ENCODE measurements at regions of chr14 and their contacts with region 1.

Region 1: GRCh38 chr14:90301668-90302090 is 30.1 kb downstream of the NRDE2 start:
- DNase-seq: no peak
- ATAC-seq: peak; percentile 77 to 78
- H3K4me3 ChIP-seq: no peak overlapping the region
- H3K27ac ChIP-seq: peak overlapping the region; percentile 74 to 88 (median 82)
- H3K4me1 ChIP-seq: peaks cover 27 to 32% of the 10 kb centered on the region in 2 donors
- H3K27me3 ChIP-seq: no peaks in the 10 kb centered on the region
- CTCF ChIP-seq: peak in 4 of 5 experiments; percentile 36 to 66 (median 45)
- POLR2A ChIP-seq: no peak

Region 2: GRCh38 chr14:90556012-90556477 is 254.4 kb after region 1 on chr14:
- in situ Hi-C with region 1: no loop called
- intact Hi-C with region 1: no loop called
- DNase-seq: no peak
- ATAC-seq: no peak
- H3K4me3 ChIP-seq: no peak overlapping the region
- H3K27ac ChIP-seq: no peak overlapping the region
- H3K4me1 ChIP-seq: peaks cover 0 to 8% of the 10 kb centered on the region in 2 donors
- H3K27me3 ChIP-seq: no peaks in the 10 kb centered on the region
- CTCF ChIP-seq: no peak
- POLR2A ChIP-seq: no peak

Region 3: DNA sequence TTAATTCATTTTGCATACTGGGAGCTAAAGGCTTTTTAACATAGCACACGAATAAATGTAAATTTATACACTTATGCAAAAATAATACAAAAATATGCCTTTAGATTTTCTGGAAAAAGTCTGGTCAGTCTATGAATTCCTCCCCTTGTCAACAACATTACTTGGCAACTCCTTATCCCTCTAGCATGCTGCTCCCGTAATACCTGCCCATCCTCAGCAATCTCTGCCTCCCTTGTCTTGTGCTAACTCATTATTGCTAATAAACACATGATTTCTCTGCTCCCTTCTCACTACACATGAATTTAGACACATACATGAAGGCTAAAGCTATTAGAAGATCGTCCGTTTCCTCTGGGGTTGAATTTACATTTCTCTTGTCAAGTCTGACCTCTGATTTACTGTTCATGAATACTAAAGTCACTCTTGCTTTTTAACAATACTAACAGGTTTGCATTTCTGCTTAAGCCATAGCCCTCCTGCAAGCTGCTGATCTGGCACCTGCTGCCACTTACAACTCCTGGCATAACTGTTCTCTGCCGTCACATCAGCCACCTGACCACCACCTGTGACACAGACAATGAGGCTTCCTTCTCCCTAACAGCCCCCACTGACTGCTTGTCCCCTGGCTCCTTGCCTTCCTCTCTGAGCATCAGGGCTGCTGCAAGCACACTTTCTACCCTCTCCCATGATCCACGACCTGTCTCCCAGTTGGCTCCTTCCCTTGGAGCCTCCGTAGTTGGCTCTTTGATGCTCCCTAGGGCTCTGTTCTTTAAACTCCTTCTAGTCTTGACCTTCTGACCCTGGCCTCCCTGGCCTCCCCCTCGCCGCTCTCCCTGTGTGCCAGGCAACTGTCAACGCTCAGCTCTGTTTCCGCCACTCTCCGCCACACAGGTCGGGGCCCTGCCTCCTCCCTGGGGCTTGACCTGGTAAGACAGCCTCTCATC is 272.8 kb after region 1 on chr14:
- in situ Hi-C with region 1: no loop called
- intact Hi-C with region 1: loop called (anchors 5 kb)
- DNase-seq: peak; percentile 27 to 75
- ATAC-seq: peak; percentile 40 to 43
- H3K4me3 ChIP-seq: no peak overlapping the region
- H3K27ac ChIP-seq: peak overlapping the region; percentile 64 to 72 (median 66)
- H3K4me1 ChIP-seq: peaks cover 48 to 58% of the 10 kb centered on the region in 2 donors
- H3K27me3 ChIP-seq: no peaks in the 10 kb centered on the region
- CTCF ChIP-seq: no peak
- POLR2A ChIP-seq: no peak

Region 4: DNA sequence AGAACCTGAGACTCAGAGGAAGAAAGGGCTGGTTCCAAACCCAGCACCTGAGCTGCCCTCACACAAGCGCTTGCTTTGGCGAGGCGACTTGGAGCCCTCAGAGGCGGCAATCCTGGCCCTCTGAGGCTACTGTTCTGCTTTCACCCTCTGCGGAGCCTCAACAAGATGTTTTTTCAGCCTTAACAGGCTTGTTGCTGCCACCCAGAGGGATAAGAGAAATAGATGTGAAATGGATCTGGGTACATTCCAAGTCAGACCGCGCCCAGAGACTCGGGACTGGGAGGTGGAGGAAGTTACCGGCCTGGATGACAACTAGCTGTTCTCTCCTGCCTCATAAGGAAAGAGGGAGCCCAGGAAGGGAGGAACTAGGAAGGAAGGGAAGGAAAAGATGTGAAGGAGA is 425.0 kb after region 1 on chr14:
- in situ Hi-C with region 1: loop called in 1 of 4 experiments (anchors 25 kb)
- intact Hi-C with region 1: no loop called
- DNase-seq: peak; percentile 78 to 79
- ATAC-seq: peak; percentile 88
- H3K4me3 ChIP-seq: no peak overlapping the region
- H3K27ac ChIP-seq: peak overlapping the region; percentile 62 to 81 (median 78)
- H3K4me1 ChIP-seq: peaks cover 16 to 19% of the 10 kb centered on the region in 2 donors
- H3K27me3 ChIP-seq: no peaks in the 10 kb centered on the region
- CTCF ChIP-seq: peak in 4 of 5 experiments; percentile 25 to 49 (median 32)
- POLR2A ChIP-seq: peak in 1 of 2 donors; percentile 29

Region 5: DNA sequence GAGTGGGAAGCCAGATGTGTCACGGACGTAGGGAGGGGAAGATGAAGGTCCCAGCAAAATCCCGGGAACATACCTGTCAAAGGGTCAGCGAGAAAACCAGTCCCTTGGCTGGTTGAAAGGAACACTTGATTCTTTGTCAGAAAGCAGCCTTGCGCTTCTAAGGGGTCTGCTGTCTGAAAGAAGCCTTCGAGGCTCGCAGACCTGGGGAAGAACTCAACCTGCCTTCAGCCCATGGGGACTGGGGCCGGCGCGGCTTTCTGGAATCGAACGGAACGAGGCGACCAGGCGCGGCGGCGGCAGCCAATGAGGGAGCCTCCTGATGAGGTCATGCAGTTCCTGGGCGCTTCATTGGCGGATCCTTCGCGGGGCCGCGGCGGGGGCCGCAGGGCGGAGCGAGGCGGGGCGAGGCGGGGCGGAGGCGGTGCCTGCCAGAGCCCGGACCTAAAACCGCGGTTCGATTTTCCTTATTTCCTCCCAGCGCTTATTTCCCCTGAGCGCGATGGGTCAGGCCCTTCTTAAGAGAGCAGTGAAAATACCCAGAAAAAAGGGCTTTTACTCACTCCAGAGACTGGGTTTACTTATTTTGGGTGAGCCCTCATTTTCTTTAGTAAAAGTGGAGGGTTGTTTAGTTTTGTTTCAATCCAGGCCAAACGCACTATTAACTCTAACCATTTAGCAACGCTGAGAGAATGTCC is 526.4 kb after region 1 on chr14:
- in situ Hi-C with region 1: no loop called
- intact Hi-C with region 1: loop called (anchors 5 kb)
- DNase-seq: peak; percentile 90 to 94
- ATAC-seq: peak; percentile 98 to 99
- H3K4me3 ChIP-seq: peak overlapping the region; percentile 45 to 72 (median 57)
- H3K27ac ChIP-seq: peak overlapping the region; percentile 75 to 89 (median 83)
- H3K4me1 ChIP-seq: peaks cover 12 to 14% of the 10 kb centered on the region in 2 donors
- H3K27me3 ChIP-seq: no peaks in the 10 kb centered on the region
- CTCF ChIP-seq: no peak
- POLR2A ChIP-seq: peak; percentile 55 to 77